ENCODE measurements at regions of chr2 and their contacts with region 1.

Region 1: GRCh38 chr2:61176755-61177726 is 15.1 kb downstream of the C2orf74 start:
- DNase-seq: peak; percentile 95
- H3K4me3 Mint-ChIP-seq: peak overlapping the region; percentile 89
- H3K27ac Mint-ChIP-seq: peak overlapping the region; percentile 88
- H3K4me1 Mint-ChIP-seq: peaks cover 54% of the 10 kb centered on the region
- H3K27me3 Mint-ChIP-seq: peaks cover 4% of the 10 kb centered on the region

Region 2: GRCh38 chr2:61016808-61017555 is 160.1 kb before region 1 on chr2:
- CTCF ChIA-PET with region 1: no interaction called
- POLR2A ChIA-PET with region 1: interaction called, 30 read pairs
- DNase-seq: peak; percentile 74
- H3K4me3 Mint-ChIP-seq: peak overlapping the region; percentile 96
- H3K27ac Mint-ChIP-seq: peak overlapping the region; percentile 89
- H3K4me1 Mint-ChIP-seq: peaks cover 49% of the 10 kb centered on the region
- H3K27me3 Mint-ChIP-seq: no peaks in the 10 kb centered on the region

Region 3: DNA sequence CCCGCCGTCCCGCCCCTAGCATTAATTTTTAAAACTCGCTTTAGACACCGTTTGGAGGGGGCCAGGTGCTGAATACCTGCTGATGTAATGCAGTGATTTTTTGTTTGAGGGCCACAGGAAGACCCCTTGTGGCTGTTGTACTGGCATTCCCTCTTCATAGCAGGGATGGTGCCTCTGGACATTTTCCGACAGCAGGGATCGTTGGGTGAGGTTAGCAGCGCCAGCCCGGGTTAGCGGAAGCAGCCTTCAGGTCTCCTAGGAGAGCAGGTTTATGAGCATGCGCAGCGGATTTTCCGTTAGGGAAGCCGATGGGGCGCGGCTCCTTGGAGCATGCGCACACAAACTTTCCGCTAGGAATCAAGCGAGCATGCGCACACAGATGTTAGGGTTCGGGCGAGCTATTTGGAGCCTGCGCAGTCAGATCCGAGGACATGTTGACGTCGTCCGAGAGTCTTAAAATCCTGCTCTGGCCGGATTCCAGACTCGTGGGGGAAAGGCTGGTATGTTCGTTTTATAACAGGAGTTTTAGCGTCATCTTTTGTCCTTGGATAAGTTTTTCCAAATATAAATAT is 32.3 kb before region 1 on chr2:
- CTCF ChIA-PET with region 1: interaction called, 3 read pairs
- POLR2A ChIA-PET with region 1: interaction called, 50 read pairs
- DNase-seq: peak; percentile 94
- H3K4me3 Mint-ChIP-seq: peak overlapping the region; percentile 82
- H3K27ac Mint-ChIP-seq: peak overlapping the region; percentile 83
- H3K4me1 Mint-ChIP-seq: peaks cover 13% of the 10 kb centered on the region
- H3K27me3 Mint-ChIP-seq: no peaks in the 10 kb centered on the region

Region 4: GRCh38 chr2:61193670-61194571 is 16.9 kb after region 1 on chr2:
- CTCF ChIA-PET with region 1: interaction called, 3 read pairs
- POLR2A ChIA-PET with region 1: interaction called, 35 read pairs
- DNase-seq: peak; percentile 37
- H3K4me3 Mint-ChIP-seq: no peak overlapping the region
- H3K27ac Mint-ChIP-seq: peak overlapping the region; percentile 33
- H3K4me1 Mint-ChIP-seq: peaks cover 19% of the 10 kb centered on the region
- H3K27me3 Mint-ChIP-seq: no peaks in the 10 kb centered on the region

Region 5: DNA sequence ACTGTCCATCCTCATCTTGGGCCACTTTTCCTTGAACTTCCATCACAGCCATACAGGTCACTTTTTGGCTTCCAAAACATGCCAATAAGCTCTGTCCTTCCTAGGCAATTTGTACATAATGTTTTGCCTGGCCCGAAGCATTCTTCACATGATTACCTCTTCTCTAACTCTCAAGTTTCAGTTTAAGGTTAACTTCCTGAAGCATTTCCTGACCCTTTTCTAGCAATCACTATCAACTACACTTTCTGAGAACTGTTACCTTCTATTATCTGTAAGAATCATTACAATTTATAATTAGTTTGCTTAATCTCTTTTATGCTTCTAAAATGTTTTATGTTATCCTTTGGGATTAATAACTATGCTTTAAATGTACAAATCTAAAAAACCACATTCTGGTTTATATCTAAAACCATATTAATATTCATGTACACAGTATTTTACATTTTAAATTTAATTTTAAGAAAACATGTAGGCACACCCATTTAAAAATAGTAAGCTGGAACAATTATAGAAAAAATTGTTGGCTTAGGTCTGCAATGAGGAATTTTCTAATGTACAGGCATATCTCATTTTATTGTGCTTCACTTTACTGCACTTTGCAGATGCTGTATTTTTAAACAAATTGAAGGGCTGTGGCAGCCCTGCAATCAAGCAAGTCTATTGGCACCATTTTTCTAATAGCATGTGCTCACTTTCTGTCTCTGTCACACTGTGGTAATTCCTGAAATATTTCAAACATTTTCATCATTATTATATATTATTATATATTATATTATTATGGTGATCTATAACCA is 61.4 kb after region 1 on chr2:
- CTCF ChIA-PET with region 1: interaction called, 3 read pairs
- POLR2A ChIA-PET with region 1: interaction called, 37 read pairs
- DNase-seq: no peak
- H3K4me3 Mint-ChIP-seq: peak overlapping the region; percentile 47
- H3K27ac Mint-ChIP-seq: peak overlapping the region; percentile 88
- H3K4me1 Mint-ChIP-seq: peaks cover 39% of the 10 kb centered on the region
- H3K27me3 Mint-ChIP-seq: no peaks in the 10 kb centered on the region

Region 6: GRCh38 chr2:61538200-61538919 is 361.3 kb after region 1 on chr2 and contains the start of gene XPO1:
- CTCF ChIA-PET with region 1: interaction called, 3 read pairs
- POLR2A ChIA-PET with region 1: interaction called, 44 read pairs
- DNase-seq: peak; percentile 99
- H3K4me3 Mint-ChIP-seq: peak within 1 kb of the TSS; percentile 97
- H3K27ac Mint-ChIP-seq: peak within 1 kb of the TSS; percentile 100
- H3K4me1 Mint-ChIP-seq: peaks cover 37% of the 10 kb centered on the region
- H3K27me3 Mint-ChIP-seq: no peaks in the 10 kb centered on the region
- total RNA-seq, gene XPO1: 166 to 172 TPM

Measured in activated CD4-positive, alpha-beta memory T cell treated with anti-CD3 and anti-CD28 coated beads, Interleukin-2, amount 10 ng/mL, durations not matched to agents 7 days and 5 days (primary cell).